GM12878 (cell line): ENCODE measurements at regions of chr5 and their contacts with region 1.

Region 1: DNA sequence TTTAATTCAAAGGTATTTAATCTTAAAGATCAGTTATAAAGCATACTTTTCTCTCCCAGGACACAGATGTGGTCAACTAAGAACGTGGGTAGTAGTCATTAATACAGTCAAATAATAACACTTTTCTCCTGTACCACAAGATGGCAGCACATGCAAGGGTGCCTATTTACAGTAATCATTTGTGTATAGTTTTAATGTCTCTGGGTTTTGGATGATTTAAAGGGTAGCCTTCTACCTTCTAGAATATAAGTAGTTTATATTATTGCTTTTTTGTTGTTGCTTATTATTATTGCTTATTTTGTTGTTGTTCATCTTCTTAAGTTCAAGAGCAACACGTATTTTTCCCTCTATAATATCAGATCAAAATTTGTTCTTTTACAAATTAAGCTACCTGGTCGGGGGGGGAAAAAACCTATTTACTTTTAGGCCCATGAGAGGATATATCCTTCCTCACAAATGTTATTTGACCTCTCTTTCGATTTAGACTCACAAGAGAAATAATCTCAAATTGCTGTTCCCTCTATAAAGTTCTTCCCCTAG is 59.6 kb upstream of the SLC27A6 start:
- DNase-seq: no peak
- ATAC-seq: peak; percentile 95
- H3K4me3 ChIP-seq: no peak overlapping the region
- H3K27ac ChIP-seq: no peak overlapping the region
- H3K4me1 ChIP-seq: no peaks in the 10 kb centered on the region
- H3K27me3 ChIP-seq: no peaks in the 10 kb centered on the region
- CTCF ChIP-seq: peak; percentile 63 to 84 (median 64); a peak in 5 of 6 replicates
- EP300 ChIP-seq: no peak
- POLR2A ChIP-seq: no peak
- RAD21 ChIP-seq: peak; percentile 89

Region 2: DNA sequence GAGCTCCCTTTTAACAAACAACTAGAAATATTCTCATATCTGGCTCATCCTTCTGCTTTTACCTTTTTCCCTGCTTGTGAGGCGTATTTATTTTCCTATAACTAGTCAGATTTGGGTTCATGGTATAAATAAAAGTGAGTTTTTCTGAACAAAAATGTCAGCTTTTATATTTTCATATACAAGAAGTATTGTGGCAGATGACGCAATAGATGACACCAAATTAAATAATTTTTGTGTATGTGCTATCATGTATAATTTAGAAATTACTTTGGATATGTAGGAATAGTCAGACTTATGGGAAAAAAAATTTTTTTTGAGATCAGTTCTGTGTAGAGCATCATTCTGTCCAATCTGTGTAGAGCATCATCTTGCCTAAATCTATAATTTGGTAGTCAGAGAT is 13.9 kb after region 1 on chr5:
- CTCF ChIA-PET with region 1: interaction called, 13 read pairs
- POLR2A ChIA-PET with region 1: no interaction called
- RAD21 ChIA-PET with region 1: no interaction called
- SMC1A ChIA-PET with region 1: no interaction called
- in situ Hi-C with region 1: no loop called
- intact Hi-C with region 1: no loop called
- DNase-seq: no peak
- ATAC-seq: no peak
- H3K4me3 ChIP-seq: no peak overlapping the region
- H3K27ac ChIP-seq: no peak overlapping the region
- H3K4me1 ChIP-seq: no peaks in the 10 kb centered on the region
- H3K27me3 ChIP-seq: no peaks in the 10 kb centered on the region
- CTCF ChIP-seq: no peak
- EP300 ChIP-seq: no peak
- POLR2A ChIP-seq: no peak
- RAD21 ChIP-seq: no peak

Region 3: DNA sequence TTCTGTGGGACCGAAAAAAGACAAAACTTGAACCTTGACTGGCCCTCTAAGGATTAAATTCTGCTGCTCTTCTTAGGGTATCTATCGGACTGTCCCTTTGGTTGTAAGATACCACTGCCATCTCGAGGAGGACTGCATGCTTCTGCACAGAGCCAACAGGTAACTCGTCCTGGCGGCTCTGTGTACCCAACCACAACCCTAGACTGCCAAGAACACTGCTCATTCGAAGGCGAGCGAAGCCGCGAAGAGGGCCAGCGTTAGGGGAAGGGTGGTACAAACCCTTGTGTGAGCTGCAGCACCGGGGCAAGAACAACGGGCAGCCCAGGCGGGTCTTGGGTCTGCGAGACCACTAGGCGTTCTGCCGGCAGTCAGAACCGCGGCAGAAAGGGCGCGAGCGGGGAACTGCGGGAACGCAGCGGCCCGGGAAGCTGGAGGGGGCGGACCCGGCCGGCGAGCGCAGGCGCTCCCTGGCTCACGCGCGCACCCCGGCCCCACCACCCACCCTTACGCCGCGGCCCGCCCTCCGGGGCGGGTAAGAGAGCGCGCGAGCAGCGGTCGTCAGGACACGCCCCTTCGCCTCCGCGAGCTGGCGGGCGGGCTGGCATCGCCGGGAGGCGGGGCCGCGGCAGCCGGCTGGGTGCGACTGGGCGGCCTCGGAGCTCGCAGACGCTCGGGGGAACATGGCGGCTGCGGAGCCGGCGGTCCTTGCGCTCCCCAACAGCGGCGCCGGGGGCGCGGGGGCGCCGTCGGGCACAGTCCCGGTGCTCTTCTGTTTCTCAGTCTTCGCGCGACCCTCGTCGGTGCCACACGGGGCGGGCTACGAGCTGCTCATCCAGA is 188.7 kb after region 1 on chr5 and contains the start of gene ISOC1:
- CTCF ChIA-PET with region 1: interaction called, 8 read pairs
- POLR2A ChIA-PET with region 1: no interaction called
- RAD21 ChIA-PET with region 1: interaction called, 4 read pairs
- SMC1A ChIA-PET with region 1: interaction called, 15 read pairs
- in situ Hi-C with region 1: no loop called
- intact Hi-C with region 1: no loop called
- DNase-seq: peak; percentile 42
- ATAC-seq: peak; percentile 92
- H3K4me3 ChIP-seq: peak within 1 kb of the TSS; percentile 83
- H3K27ac ChIP-seq: peak within 1 kb of the TSS; percentile 71
- H3K4me1 ChIP-seq: no peaks in the 10 kb centered on the region
- H3K27me3 ChIP-seq: 0 out of 4 replicates have a peak, but pooled peaks cover 0 to under 1% of the 10 kb centered on the region in 2 experiments
- CTCF ChIP-seq: peak in 1 of 3 experiments; percentile 10; a peak in 1 of 6 replicates
- EP300 ChIP-seq: no peak
- POLR2A ChIP-seq: peak; percentile 80
- RAD21 ChIP-seq: no peak
- polyA plus RNA-seq, gene ISOC1: 12.6 to 16.5 TPM

Region 4: DNA sequence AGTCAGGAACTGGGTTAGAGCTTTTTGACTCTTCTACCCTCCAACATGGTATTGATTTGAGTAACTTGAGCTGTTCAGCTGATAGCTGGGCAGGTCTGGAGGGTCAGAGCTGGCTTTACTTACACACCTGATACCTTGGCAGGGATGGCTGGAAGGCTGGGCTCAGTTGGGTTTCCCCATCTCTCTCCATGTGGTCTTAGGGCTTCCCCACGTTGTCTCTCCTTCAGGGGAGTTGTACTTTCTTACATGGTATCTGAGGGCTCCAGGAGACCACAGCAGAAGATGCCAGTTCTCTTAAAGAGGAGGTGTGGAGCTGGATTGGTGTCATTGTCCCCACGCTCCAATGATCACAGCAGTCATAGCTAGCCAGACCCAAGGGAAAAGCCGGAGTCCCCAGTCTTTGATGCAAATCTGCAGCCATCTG is 214.5 kb after region 1 on chr5:
- CTCF ChIA-PET with region 1: interaction called, 56 read pairs
- POLR2A ChIA-PET with region 1: no interaction called
- RAD21 ChIA-PET with region 1: interaction called, 20 read pairs
- SMC1A ChIA-PET with region 1: interaction called, 3 read pairs
- in situ Hi-C with region 1: loop called (anchors 5 kb)
- intact Hi-C with region 1: no loop called
- DNase-seq: peak; percentile 24
- ATAC-seq: peak; percentile 90
- H3K4me3 ChIP-seq: no peak overlapping the region
- H3K27ac ChIP-seq: no peak overlapping the region
- H3K4me1 ChIP-seq: peaks cover 5% of the 10 kb centered on the region; the same call in 1 of the 2 replicates
- H3K27me3 ChIP-seq: no peaks in the 10 kb centered on the region
- CTCF ChIP-seq: no peak
- EP300 ChIP-seq: no peak
- POLR2A ChIP-seq: no peak
- RAD21 ChIP-seq: no peak

Region 5: GRCh38 chr5:129125810-129126209 is 220.2 kb after region 1 on chr5:
- CTCF ChIA-PET with region 1: interaction called, 56 read pairs
- POLR2A ChIA-PET with region 1: no interaction called
- RAD21 ChIA-PET with region 1: interaction called, 20 read pairs
- SMC1A ChIA-PET with region 1: interaction called, 11 read pairs
- in situ Hi-C with region 1: loop called (anchors 5 kb)
- intact Hi-C with region 1: no loop called
- DNase-seq: peak; percentile 43
- ATAC-seq: peak; percentile 89
- H3K4me3 ChIP-seq: no peak overlapping the region
- H3K27ac ChIP-seq: peak overlapping the region; percentile 73
- H3K4me1 ChIP-seq: peaks cover 8% of the 10 kb centered on the region
- H3K27me3 ChIP-seq: no peaks in the 10 kb centered on the region
- CTCF ChIP-seq: 0 out of 6 replicates have a peak, but pooled peaks of 1 of the 3 experiments have one; percentile 11
- EP300 ChIP-seq: no peak
- POLR2A ChIP-seq: no peak
- RAD21 ChIP-seq: no peak

Region 6: GRCh38 chr5:129135633-129136032 is 230.0 kb after region 1 on chr5:
- CTCF ChIA-PET with region 1: interaction called, 8 read pairs
- POLR2A ChIA-PET with region 1: no interaction called
- RAD21 ChIA-PET with region 1: interaction called, 3 read pairs
- SMC1A ChIA-PET with region 1: interaction called, 4 read pairs
- in situ Hi-C with region 1: no loop called
- intact Hi-C with region 1: loop called (anchors 2 kb)
- DNase-seq: no peak
- ATAC-seq: peak; percentile 87
- H3K4me3 ChIP-seq: no peak overlapping the region
- H3K27ac ChIP-seq: no peak overlapping the region
- H3K4me1 ChIP-seq: no peaks in the 10 kb centered on the region
- H3K27me3 ChIP-seq: no peaks in the 10 kb centered on the region
- CTCF ChIP-seq: peak; percentile 17 to 68 (median 48); a peak in 4 of 6 replicates
- EP300 ChIP-seq: no peak
- POLR2A ChIP-seq: no peak
- RAD21 ChIP-seq: peak; percentile 44

Region 7: DNA sequence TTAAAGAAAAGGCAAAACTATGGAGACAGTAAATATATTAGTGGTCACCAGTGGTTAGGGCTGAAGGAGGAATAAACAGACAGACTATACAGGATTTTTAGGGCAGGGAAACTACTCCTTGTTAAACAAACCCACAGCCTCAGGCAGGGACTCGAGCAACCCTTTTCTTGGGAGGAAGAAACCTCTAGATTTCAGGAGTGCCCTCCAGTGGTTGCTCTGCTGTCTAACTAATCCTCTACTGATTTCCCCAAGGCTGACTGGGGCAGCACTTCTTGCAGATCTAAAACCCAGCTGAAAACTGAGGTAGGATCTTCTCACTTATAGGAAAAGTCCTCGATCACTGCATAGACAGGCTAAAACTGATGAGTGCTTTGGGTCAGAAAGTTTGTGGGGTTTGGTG is 365.7 kb after region 1 on chr5:
- CTCF ChIA-PET with region 1: interaction called, 5 read pairs
- POLR2A ChIA-PET with region 1: no interaction called
- RAD21 ChIA-PET with region 1: no interaction called
- SMC1A ChIA-PET with region 1: no interaction called
- in situ Hi-C with region 1: no loop called
- intact Hi-C with region 1: loop called (anchors 1 kb)
- DNase-seq: no peak
- ATAC-seq: peak; percentile 63
- H3K4me3 ChIP-seq: no peak overlapping the region
- H3K27ac ChIP-seq: no peak overlapping the region
- H3K4me1 ChIP-seq: no peaks in the 10 kb centered on the region
- H3K27me3 ChIP-seq: no peaks in the 10 kb centered on the region
- CTCF ChIP-seq: peak in 2 of 3 experiments; percentile 21 to 31; a peak in 2 of 6 replicates
- EP300 ChIP-seq: no peak
- POLR2A ChIP-seq: no peak
- RAD21 ChIP-seq: no peak